Psoas muscle (tissue), 8 donors: ENCODE measurements at regions of chr1 and their contacts with region 1.

Region 1: DNA sequence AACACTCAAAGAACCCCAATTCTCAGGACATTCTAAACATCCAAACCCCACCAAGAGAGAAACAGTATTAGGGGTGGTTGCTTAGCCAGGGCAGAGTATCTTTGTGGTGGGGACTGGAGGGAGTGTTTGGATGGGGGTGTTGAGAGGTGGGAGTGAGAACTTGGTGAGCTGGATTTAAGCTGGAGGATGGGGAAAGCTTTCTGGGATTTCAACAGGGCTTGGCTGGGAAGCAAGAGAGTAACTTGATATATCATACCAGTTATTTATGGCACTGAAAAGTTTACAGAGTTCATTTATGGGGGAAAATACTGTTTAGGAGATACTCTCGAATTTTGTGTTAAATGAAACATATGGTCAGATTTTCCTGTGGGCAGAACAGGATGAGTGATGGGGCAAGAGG is 6.8 kb upstream of the CNIH3 start:
- DNase-seq: no peak
- ATAC-seq: peak in 2 of 4 donors; percentile 53 to 64
- H3K4me3 ChIP-seq: no peak overlapping the region
- H3K27ac ChIP-seq: no peak overlapping the region
- H3K4me1 ChIP-seq: peaks cover 3% of the 10 kb centered on the region
- H3K27me3 ChIP-seq: peaks cover 0 to 2% (median 0%) of the 10 kb centered on the region in 3 donors
- CTCF ChIP-seq: no peak

Region 2: DNA sequence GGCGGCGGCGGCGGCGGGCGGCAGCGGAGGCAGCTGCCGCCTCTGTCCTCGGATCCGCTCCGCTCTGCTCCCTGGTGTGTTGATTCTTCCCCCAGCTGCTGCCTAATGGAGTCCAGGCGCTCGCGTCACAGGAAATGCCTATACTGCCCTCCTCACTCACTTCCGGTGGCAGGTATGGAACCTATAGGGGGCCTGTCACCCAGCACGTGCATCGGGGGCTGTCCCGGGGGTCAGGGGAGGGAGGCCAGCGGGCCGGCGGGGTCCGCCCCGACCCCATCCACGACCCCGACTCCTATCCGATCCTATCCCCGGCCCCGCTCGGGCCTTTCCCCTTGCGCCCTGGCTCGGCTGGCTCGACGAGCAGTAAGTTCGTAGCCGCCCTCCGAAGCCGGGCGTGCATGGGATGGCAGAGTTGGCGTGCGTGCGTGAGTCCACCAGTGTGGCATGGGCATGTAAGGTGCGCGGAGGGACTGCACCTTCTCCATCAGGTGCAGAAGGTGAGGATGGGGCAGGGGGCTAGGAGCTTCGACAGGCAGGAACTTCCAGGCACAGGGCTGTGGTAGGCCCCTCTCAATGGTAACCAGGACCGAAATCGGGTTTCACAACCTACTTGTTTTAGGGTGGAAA is 174.5 kb before region 1 on chr1 and contains the start of gene WDR26:
- intact Hi-C with region 1: no loop called
- DNase-seq: peak; percentile 76 to 88
- ATAC-seq: peak; percentile 81 to 89 (median 84)
- H3K4me3 ChIP-seq: peak within 1 kb of the TSS; percentile 85
- H3K27ac ChIP-seq: peak within 1 kb of the TSS; percentile 96
- H3K4me1 ChIP-seq: peaks cover 35% of the 10 kb centered on the region
- H3K27me3 ChIP-seq: no peaks in the 10 kb centered on the region
- CTCF ChIP-seq: no peak
- total RNA-seq, gene WDR26: 82.4 to 114 (median 107) TPM

Region 3: DNA sequence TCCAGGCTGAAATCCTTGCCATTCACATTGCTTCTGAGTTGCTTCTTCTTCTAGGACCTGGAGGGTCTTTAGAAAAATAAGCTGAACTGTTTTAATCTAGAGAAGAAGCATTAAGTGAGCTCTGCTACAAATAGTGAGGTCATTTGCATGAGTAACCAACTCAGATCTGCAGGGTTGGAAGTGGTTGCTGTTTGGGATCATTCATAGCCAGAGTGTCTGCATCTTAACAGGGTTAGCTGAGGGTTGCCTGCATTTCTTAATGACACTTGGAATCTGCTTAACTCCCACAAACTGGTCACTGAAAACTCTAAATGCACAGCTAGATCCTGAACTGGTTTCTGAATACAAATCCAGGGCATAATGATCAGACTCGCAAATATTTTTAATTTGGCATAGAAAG is 16.7 kb after region 1 on chr1:
- intact Hi-C with region 1: loop called in 1 of 2 experiments (anchors 2 kb)
- DNase-seq: no peak
- ATAC-seq: no peak
- H3K4me3 ChIP-seq: no peak overlapping the region
- H3K27ac ChIP-seq: no peak overlapping the region
- H3K4me1 ChIP-seq: no peaks in the 10 kb centered on the region
- H3K27me3 ChIP-seq: peaks cover 0 to 5% (median 4%) of the 10 kb centered on the region in 3 donors
- CTCF ChIP-seq: no peak

Region 4: GRCh38 chr1:224668984-224669383 is 59.7 kb after region 1 on chr1:
- intact Hi-C with region 1: no loop called
- DNase-seq: peak in 1 of 2 donors; percentile 61
- ATAC-seq: peak; percentile 81 to 93 (median 88)
- H3K4me3 ChIP-seq: no peak overlapping the region
- H3K27ac ChIP-seq: no peak overlapping the region
- H3K4me1 ChIP-seq: peaks cover 4% of the 10 kb centered on the region
- H3K27me3 ChIP-seq: peaks cover 0 to 1% (median 0%) of the 10 kb centered on the region in 3 donors
- CTCF ChIP-seq: no peak